Activated CD4-positive, alpha-beta T cell treated with anti-CD3 and anti-CD28 coated beads for 36 hours (primary cell): ENCODE measurements at regions of chr2 and their contacts with region 1.

Region 1: DNA sequence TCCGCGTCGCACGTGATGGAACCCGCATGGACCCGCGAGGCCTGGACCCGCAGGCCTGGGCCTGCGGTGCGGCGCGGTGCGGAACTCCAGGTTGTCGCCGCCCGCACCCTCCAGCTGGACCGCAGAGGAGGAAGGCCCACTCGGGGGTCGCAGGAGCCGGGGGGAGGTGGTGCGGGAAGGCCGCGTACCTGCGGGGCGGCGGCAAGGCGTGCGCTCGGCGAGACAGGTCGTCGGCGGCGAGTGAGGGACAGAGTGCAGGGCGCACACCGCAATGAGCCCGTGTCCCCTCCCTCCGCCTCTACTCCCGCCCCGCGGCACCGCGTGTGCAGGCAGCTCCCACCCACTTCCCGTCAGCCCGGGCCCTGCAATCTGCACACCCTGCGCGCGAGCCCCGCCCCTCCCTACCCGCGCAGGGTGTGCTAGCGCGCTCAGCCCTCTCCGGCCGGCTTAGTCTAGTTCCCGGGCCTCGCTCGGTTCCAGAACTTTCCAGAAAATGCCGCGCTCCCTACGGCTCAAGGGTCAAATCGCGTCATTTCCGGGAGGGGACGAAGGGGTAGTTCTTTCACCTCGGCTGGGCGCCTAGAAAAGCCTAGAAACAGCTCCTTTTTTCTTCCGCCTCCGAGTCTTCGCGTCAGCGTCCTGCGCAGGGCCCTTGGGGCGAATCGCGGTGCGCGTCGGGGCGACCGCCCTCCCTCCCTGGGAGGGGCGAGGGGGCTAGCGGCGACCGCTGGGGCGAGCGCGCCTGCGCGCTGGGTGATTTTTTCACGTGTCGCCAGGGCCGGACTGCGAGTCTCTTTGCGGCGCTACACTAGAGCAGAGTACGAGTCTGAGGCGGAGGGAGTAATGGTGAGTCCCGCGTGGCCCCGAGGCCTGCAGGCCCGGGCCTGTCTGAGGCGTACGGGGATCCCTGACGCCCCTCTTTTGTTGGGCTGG is at the starts of genes HSPD1 and HSPE1:
- DNase-seq: peak; percentile 99
- ATAC-seq: peak; percentile 88
- H3K4me3 Mint-ChIP-seq: peak within 1 kb of the TSS; percentile 92
- H3K27ac Mint-ChIP-seq: peak within 1 kb of the TSS; percentile 97
- H3K4me1 Mint-ChIP-seq: peaks cover 57% of the 10 kb centered on the region
- H3K27me3 Mint-ChIP-seq: no peaks in the 10 kb centered on the region
- total RNA-seq, gene HSPD1: 872 to 1,138 TPM
- total RNA-seq, gene HSPE1: 250 to 356 TPM

Region 2: GRCh38 chr2:196171248-196171871 is 1328.5 kb before region 1 on chr2 and contains the start of gene STK17B:
- CTCF ChIA-PET with region 1: no interaction called
- POLR2A ChIA-PET with region 1: no interaction called
- intact Hi-C with region 1: loop called (anchors 1 to 5 kb)
- DNase-seq: peak; percentile 99
- ATAC-seq: peak; percentile 76
- H3K4me3 Mint-ChIP-seq: peak within 1 kb of the TSS; percentile 92
- H3K27ac Mint-ChIP-seq: peak within 1 kb of the TSS; percentile 98
- H3K4me1 Mint-ChIP-seq: peaks cover 38% of the 10 kb centered on the region
- H3K27me3 Mint-ChIP-seq: no peaks in the 10 kb centered on the region
- total RNA-seq, gene STK17B: 159 to 178 TPM

Region 3: GRCh38 chr2:196798980-196799379 is 700.9 kb before region 1 on chr2:
- CTCF ChIA-PET with region 1: no interaction called
- POLR2A ChIA-PET with region 1: interaction called, 4 read pairs
- intact Hi-C with region 1: loop called in 1 of 2 experiments (anchors 5 kb)
- DNase-seq: no peak
- ATAC-seq: peak; percentile 5
- H3K4me3 Mint-ChIP-seq: peak overlapping the region; percentile 85
- H3K27ac Mint-ChIP-seq: peak overlapping the region; percentile 97
- H3K4me1 Mint-ChIP-seq: peaks cover 38% of the 10 kb centered on the region
- H3K27me3 Mint-ChIP-seq: peaks cover 2% of the 10 kb centered on the region

Region 4: GRCh38 chr2:197198890-197199289 is 301.0 kb before region 1 on chr2:
- CTCF ChIA-PET with region 1: no interaction called
- POLR2A ChIA-PET with region 1: interaction called, 3 read pairs
- intact Hi-C with region 1: loop called (anchors 5 kb)
- DNase-seq: peak; percentile 93
- ATAC-seq: peak; percentile 93
- H3K4me3 Mint-ChIP-seq: peak overlapping the region; percentile 77
- H3K27ac Mint-ChIP-seq: peak overlapping the region; percentile 91
- H3K4me1 Mint-ChIP-seq: peaks cover 90% of the 10 kb centered on the region
- H3K27me3 Mint-ChIP-seq: no peaks in the 10 kb centered on the region

Region 5: DNA sequence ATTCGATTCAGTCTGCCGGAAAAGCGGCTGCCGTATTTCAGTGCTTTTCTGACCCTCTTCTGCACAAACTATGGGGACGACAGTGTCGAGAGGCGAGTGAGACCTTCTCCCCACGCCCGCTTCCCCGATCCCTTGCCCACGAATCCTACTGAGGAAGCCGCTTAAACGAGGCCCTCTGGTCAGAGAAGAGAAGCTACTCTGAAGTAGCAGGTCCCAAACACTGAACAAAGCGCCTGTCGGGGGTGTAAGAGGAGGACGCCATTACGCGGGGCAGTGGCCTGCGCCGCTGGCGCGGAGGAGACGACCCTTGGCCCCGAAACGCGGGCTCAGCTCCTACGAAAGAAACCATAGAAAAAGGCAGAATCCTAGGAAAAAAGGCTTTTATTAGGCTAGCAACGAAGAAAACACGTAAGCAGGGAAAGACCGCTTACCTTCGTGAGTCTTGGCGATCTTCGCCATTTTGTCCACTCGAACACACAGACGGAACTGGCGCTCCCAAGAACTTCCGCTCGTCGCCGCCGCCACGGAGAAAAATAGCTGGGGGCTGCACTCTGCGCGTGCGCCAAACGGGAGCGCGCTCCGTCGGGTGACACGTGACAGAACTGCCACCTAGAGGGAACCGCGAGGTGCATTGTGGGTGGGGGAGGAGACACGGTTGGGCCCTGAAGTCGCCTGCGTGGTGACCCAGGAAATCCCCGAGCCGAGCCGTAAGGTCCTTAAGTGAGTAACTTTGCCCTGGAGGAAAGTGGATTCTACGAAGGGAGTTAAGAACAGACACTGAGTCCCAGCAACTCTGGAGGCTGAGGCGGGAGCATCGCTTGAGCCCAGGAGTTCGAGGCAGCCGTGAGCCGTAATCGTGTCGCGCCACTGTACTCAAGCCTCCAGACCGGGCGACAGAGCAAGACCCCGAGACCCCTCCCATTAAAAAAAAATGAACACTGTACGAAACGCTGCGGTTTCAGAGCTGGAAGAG is 65.0 kb before region 1 on chr2 and contains the start of gene SF3B1:
- CTCF ChIA-PET with region 1: interaction called, 9 read pairs
- POLR2A ChIA-PET with region 1: interaction called, 14 read pairs
- intact Hi-C with region 1: loop called (anchors 1 kb)
- DNase-seq: peak; percentile 100
- ATAC-seq: peak; percentile 94
- H3K4me3 Mint-ChIP-seq: peak within 1 kb of the TSS; percentile 98
- H3K27ac Mint-ChIP-seq: peak within 1 kb of the TSS; percentile 99
- H3K4me1 Mint-ChIP-seq: peaks cover 44% of the 10 kb centered on the region
- H3K27me3 Mint-ChIP-seq: no peaks in the 10 kb centered on the region
- total RNA-seq, gene SF3B1: 262 to 277 TPM

Region 6: GRCh38 chr2:197487385-197487784 is 12.5 kb before region 1 on chr2:
- CTCF ChIA-PET with region 1: no interaction called
- POLR2A ChIA-PET with region 1: interaction called, 5 read pairs
- intact Hi-C with region 1: loop called in 1 of 2 experiments (anchors 1 kb)
- DNase-seq: no peak
- ATAC-seq: no peak
- H3K4me3 Mint-ChIP-seq: no peak overlapping the region
- H3K27ac Mint-ChIP-seq: peak overlapping the region; percentile 5
- H3K4me1 Mint-ChIP-seq: peaks cover 26% of the 10 kb centered on the region
- H3K27me3 Mint-ChIP-seq: no peaks in the 10 kb centered on the region

Region 7: DNA sequence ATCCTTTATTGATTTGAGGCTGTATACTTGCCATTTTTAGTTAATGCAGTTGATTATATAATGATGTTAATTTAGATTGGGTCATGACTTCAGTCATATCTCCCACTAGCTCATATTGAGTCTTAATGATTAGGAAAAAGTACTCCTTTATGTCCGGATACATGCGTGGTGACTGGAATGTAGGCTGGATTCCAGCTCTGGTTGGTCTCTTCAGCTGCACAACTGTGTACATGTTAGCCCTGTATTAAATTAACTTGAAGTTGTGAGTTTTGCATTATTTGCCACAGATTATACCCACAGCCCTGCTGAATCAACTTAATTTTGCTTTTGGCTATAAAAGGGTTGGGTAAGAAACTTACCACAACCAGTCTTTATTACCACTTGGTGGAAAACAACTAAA is 38.6 kb after region 1 on chr2:
- CTCF ChIA-PET with region 1: no interaction called
- POLR2A ChIA-PET with region 1: interaction called, 13 read pairs
- intact Hi-C with region 1: no loop called
- DNase-seq: no peak
- ATAC-seq: no peak
- H3K4me3 Mint-ChIP-seq: no peak overlapping the region
- H3K27ac Mint-ChIP-seq: no peak overlapping the region
- H3K4me1 Mint-ChIP-seq: peaks cover 35% of the 10 kb centered on the region
- H3K27me3 Mint-ChIP-seq: no peaks in the 10 kb centered on the region

Region 8: DNA sequence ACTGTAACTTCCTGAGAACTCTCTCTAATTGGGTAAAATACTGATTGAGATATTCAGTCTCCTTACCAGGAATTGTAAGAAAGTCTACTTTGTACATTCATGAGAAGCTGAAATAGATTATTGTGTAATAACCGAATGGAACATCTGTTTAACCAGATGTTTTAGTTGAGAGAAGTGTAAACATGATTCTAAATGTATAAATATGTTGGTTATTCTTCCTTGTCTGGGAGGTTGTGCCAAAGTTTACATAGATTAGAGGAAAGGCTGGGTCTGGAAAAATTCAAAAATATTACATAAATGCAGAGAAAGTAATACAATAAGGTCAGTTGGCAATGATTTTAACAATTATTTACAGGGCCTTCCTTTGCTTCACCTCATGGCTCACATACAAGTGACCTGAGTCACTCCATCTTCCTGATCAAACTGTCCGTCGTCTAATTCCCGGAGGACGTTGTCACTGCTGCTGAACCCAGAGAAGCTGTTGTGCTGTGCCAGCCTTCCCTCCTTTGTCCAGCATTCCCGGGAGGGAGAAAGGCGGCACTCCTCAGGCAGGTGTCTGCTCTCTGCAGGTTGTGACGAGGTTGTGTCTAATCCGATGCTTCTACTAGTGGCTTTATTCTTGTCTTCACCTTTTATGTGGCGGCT is 71.9 kb after region 1 on chr2:
- CTCF ChIA-PET with region 1: no interaction called
- POLR2A ChIA-PET with region 1: no interaction called
- intact Hi-C with region 1: no loop called
- DNase-seq: no peak
- ATAC-seq: no peak
- H3K4me3 Mint-ChIP-seq: no peak overlapping the region
- H3K27ac Mint-ChIP-seq: no peak overlapping the region
- H3K4me1 Mint-ChIP-seq: no peaks in the 10 kb centered on the region
- H3K27me3 Mint-ChIP-seq: no peaks in the 10 kb centered on the region